Natural killer cell (primary cell): ENCODE measurements at regions of chr16 and their contacts with region 1.

Region 1: DNA sequence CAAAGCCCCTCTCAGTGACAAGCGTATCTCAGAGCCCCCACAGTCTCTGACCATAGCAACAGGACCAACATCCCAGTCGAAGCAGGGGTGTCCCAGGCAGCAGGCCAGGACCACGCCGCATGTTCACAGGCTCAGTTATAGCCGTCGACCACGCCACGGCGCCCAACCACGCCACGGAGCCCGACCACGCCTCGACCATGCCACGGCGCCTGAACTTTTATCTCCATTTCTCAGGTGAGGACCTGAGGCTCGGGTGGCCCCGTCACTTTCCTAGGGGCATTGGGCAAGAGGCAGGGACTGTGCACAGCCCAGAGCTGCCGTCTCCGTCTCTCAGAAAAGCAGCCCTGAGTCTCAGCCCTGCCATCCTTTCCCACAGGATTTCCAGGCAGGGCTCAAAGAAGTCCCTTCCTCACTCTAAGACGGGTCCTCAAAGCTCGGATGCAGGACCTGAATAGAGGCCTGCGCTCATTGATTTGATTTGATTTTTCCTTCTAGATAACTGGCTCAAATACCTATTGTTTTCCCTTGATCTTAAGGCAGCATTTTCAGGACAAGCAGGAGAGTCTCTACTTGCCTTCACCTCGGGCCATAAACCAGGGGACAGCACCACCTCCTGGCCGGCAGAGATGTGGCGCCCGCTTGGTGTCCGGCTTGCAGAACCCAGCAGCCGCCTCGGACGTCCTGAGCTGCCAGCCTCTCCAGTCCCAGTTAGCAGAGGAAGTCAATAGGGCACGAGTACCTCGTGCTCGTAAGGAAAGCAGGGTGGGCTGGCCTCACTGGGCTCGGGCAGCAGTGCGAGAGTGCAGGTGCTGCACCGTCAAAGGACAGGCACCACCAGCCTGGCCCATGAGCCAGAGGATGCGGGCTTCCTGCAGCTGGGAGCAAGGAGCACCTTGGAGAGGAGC is 38.7 kb downstream of the C16orf95 start:
- DNase-seq: peak; percentile 44 to 48
- ATAC-seq: peak; percentile 65 to 86 (median 68)
- H3K4me3 ChIP-seq: no peak overlapping the region
- H3K4me3 Mint-ChIP-seq: no peak overlapping the region
- H3K27ac ChIP-seq: no peak overlapping the region
- H3K27ac Mint-ChIP-seq: no peak overlapping the region
- H3K4me1 ChIP-seq: peaks cover 7% of the 10 kb centered on the region
- H3K4me1 Mint-ChIP-seq: peaks cover 16 to 21% of the 10 kb centered on the region in 2 donors
- H3K27me3 ChIP-seq: no peaks in the 10 kb centered on the region
- H3K27me3 Mint-ChIP-seq: peaks cover 15 to 16% of the 10 kb centered on the region in 2 donors
- CTCF ChIP-seq: peak; percentile 61

Region 2: DNA sequence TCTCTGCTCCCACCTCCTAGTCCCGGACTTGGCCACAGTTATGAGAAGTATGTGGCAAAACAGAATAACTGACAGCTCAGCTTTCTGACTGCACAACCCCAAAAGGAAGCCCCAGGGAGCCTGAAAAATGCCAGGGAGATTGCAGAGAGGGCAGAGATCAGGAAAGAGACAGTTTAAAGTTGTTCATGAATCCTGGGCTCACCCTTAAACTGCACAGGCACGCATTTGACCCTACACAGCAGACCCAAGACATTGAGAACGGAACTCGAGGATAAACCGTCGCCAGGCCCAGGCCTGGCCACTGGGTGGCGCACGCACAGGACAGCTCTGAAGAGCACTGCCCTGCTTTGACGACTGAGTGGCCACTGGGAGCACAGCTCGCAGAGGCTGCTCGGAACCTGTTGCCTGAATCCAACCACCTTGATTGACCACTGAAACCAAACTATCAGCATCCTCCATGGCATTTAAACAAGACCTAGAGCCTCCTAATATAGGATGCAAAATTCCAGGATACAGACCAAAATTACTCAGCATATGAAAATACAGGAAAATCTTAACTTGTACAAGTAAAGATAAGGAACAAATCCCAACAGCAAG is 75.3 kb before region 1 on chr16:
- intact Hi-C with region 1: loop called (anchors 1 kb)
- DNase-seq: peak; percentile 53 to 54
- ATAC-seq: peak; percentile 62 to 95 (median 68)
- H3K4me3 ChIP-seq: no peak overlapping the region
- H3K4me3 Mint-ChIP-seq: no peak overlapping the region
- H3K27ac ChIP-seq: no peak overlapping the region
- H3K27ac Mint-ChIP-seq: no peak overlapping the region
- H3K4me1 ChIP-seq: peaks cover 4% of the 10 kb centered on the region
- H3K4me1 Mint-ChIP-seq: peaks cover 10 to 14% of the 10 kb centered on the region in 2 donors
- H3K27me3 ChIP-seq: peaks cover 2% of the 10 kb centered on the region
- H3K27me3 Mint-ChIP-seq: peaks cover 9 to 15% of the 10 kb centered on the region in 2 donors
- CTCF ChIP-seq: peak; percentile 76

Region 3: DNA sequence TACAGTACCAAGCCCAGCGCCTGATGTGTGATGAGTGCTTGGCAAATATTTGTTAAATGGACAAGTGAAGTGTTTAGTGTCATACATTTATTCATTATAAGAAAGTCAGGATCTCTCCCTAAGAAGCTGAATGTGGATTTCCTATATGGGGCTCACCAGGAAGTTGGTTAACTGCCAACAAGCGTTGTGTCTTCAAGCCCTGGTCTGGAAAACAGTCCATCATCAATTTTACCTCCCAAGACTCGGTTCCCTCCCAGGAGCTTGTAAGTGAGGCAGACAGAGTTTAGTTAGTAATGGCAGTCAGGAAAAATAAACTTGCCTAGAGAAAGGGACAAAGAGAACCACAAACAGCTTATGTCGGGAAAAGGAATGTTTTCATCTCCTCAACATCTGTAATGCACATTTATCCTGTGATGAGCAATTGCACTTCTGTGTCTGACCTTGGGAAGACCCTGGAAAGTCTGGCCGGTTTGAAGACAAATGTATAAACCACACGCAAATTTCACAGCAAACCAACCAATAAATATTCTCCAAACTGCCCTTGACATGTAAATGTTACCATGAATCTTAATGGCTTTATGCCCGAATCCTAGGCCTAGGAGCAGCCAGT is 10.4 kb after region 1 on chr16:
- intact Hi-C with region 1: no loop called
- DNase-seq: no peak
- ATAC-seq: no peak
- H3K4me3 ChIP-seq: no peak overlapping the region
- H3K4me3 Mint-ChIP-seq: no peak overlapping the region
- H3K27ac ChIP-seq: no peak overlapping the region
- H3K27ac Mint-ChIP-seq: no peak overlapping the region
- H3K4me1 ChIP-seq: no peaks in the 10 kb centered on the region
- H3K4me1 Mint-ChIP-seq: no peaks in the 10 kb centered on the region
- H3K27me3 ChIP-seq: no peaks in the 10 kb centered on the region
- H3K27me3 Mint-ChIP-seq: no peaks in the 10 kb centered on the region
- CTCF ChIP-seq: no peak